Activated naive CD4-positive, alpha-beta T cell treated with anti-CD3 and anti-CD28 coated beads for 36 hours (primary cell): ENCODE measurements at regions of chr2 and their contacts with region 1.

Region 1: DNA sequence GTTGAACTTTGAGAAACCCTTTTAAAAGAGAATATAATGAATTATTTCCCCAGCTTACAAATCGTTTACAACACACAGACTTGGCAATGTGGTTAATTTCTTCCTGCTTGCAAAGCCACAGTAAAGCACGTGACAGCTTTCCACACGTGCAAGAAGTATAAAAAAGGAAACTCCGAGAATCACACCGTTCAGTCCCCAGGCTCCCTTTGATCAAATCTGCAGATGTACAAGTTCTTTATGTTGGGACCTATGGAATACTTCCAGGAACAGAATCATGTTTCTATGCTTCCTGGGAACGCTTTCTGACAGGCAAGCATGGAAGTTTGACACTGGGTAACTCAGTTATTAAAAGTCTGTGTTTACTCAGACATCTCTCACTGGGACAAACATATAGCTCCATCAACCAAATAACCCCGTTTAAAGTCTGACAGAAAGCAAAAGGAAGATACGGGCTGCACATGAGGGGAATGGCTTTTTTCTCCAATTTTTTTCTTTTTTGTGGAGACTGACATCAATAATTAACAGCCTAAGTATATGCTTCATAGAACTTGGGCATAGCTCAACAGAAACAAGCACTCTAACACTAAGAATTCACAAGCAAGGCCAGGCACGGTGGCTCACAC is 134.8 kb downstream of the EIPR1 start:
- DNase-seq: peak; percentile 72
- H3K4me3 Mint-ChIP-seq: no peak overlapping the region
- H3K27ac Mint-ChIP-seq: peak overlapping the region; percentile 32
- H3K4me1 Mint-ChIP-seq: peaks cover 9% of the 10 kb centered on the region
- H3K27me3 Mint-ChIP-seq: no peaks in the 10 kb centered on the region

Region 2: GRCh38 chr2:3198119-3198518 is 44.7 kb before region 1 on chr2:
- CTCF ChIA-PET with region 1: no interaction called
- intact Hi-C with region 1: no loop called
- DNase-seq: peak; percentile 27
- H3K4me3 Mint-ChIP-seq: no peak overlapping the region
- H3K27ac Mint-ChIP-seq: no peak overlapping the region
- H3K4me1 Mint-ChIP-seq: peaks cover 5% of the 10 kb centered on the region
- H3K27me3 Mint-ChIP-seq: no peaks in the 10 kb centered on the region

Region 3: DNA sequence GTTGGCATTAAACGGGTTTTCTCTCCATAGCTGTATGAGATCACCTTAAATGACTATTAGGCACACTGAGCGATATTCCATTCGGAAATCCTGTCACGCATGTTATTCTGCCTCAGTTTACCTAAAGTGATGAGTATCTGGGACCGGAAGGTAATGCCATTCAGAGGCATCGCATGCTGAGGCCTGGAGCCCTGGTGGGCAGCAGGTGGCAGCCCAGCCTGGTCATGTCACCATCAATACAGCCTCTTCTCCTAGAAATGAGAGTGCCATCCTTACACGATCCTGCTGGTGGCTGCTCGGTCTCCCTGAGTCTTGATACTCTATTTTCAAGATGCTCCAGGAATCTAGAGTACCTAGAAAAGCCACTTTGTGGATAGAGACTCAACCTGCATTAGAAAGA is 15.0 kb after region 1 on chr2:
- CTCF ChIA-PET with region 1: no interaction called
- intact Hi-C with region 1: loop called (anchors 2 kb)
- DNase-seq: no peak
- H3K4me3 Mint-ChIP-seq: no peak overlapping the region
- H3K27ac Mint-ChIP-seq: no peak overlapping the region
- H3K4me1 Mint-ChIP-seq: peaks cover 16% of the 10 kb centered on the region
- H3K27me3 Mint-ChIP-seq: no peaks in the 10 kb centered on the region

Region 4: GRCh38 chr2:4420032-4420431 is 1177.2 kb after region 1 on chr2:
- CTCF ChIA-PET with region 1: no interaction called
- intact Hi-C with region 1: no loop called
- DNase-seq: no peak
- H3K4me3 Mint-ChIP-seq: no peak overlapping the region
- H3K27ac Mint-ChIP-seq: no peak overlapping the region
- H3K4me1 Mint-ChIP-seq: no peaks in the 10 kb centered on the region
- H3K27me3 Mint-ChIP-seq: no peaks in the 10 kb centered on the region